ENCODE measurements at regions of chr19 and their contacts with region 1.

Region 1: DNA sequence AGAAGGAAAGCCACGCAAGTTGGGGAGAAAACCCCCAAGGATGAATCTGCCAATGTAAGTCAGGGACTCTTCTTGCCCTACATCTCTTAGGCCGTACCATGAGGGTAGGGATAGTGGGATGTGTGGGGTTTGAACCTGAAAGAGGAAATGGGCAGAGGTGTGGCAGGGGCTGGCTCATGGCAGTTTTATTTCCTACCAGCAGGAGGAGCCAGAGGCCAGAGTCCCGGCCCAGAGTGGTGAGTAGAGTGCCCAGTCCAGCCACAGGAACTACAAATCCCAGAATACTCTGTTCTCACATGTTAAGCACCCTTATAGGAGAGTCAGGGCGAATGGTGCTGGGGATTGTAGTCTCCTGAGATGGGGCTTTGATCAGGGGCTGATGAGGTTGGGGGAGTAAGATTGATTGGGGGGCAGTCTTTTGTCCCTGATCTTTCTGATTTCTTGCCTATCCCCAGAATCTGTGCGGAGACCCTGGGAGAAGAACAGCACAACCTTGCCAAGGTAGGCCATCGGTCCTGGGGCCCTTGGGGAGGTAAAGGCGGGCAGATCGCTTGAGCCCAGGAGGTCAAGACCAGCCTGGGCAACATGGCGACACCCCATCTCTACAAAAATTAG is 16.5 kb downstream of the VASP start:
- DNase-seq: peak; percentile 80
- ATAC-seq: peak; percentile 97

Region 2: GRCh38 chr19:45643024-45643926 is 119.5 kb after region 1 on chr19:
- intact Hi-C with region 1: loop called (anchors 5 kb)
- DNase-seq: peak; percentile 90
- ATAC-seq: peak; percentile 73